Panc1 (cell line): ENCODE measurements at regions of chr13 and their contacts with region 1.

Region 1: GRCh38 chr13:104779311-104779710 is 1713.1 kb upstream of the SLC10A2 start:
- DNase-seq: no peak
- ATAC-seq: no peak
- H3K4me3 ChIP-seq: no peak overlapping the region
- H3K27ac ChIP-seq: no peak overlapping the region
- H3K4me1 ChIP-seq: no peaks in the 10 kb centered on the region
- H3K27me3 ChIP-seq: no peaks in the 10 kb centered on the region
- CTCF ChIP-seq: no peak

Region 2: DNA sequence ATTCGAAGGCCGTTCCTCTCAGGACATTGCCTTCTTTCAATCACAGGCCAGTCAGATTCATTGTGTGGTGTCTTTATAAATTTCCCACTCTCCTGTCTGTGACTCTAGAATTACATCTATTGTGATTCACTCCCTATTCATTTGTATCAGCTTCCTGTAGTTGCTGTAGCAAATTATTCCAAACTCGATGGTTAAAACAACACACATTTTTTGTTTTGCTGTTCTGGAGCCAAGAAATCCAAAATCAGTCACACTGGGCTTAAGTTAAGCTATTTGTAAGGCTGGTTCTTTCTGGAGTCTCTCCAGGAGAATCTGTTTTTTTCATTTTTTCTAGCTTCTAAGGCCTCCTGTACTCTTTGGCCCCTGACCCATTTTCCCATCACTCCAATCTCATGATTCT is 226.1 kb before region 1 on chr13:
- CTCF ChIA-PET with region 1: no interaction called
- POLR2A ChIA-PET with region 1: no interaction called
- in situ Hi-C with region 1: no loop called
- intact Hi-C with region 1: no loop called
- DNase-seq: no peak
- ATAC-seq: no peak
- H3K4me3 ChIP-seq: no peak overlapping the region
- H3K27ac ChIP-seq: no peak overlapping the region
- H3K4me1 ChIP-seq: no peaks in the 10 kb centered on the region
- H3K27me3 ChIP-seq: no peaks in the 10 kb centered on the region
- CTCF ChIP-seq: no peak

Region 3: DNA sequence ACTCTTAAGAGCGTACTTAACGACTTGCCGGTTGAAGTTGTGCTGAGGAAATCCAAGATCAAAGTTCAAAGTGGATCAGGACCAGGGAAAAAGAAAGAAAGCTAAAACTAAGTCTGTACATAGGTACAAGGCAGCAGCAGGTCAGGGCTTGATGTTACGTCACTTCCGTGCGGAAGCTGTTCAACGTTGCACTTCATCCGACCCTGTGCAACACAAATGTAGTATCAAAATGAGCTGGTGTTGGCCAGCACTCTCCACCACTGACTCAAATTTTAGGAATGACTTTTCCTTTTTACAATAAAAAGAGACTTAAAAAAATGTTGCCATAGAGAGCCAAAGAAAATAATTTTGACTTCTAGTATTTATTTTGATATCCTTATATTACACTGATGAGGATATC is 440.8 kb after region 1 on chr13:
- CTCF ChIA-PET with region 1: interaction called, 11 read pairs
- POLR2A ChIA-PET with region 1: no interaction called
- in situ Hi-C with region 1: no loop called
- intact Hi-C with region 1: no loop called
- DNase-seq: no peak
- ATAC-seq: no peak
- H3K4me3 ChIP-seq: no peak overlapping the region
- H3K27ac ChIP-seq: no peak overlapping the region
- H3K4me1 ChIP-seq: no peaks in the 10 kb centered on the region
- H3K27me3 ChIP-seq: no peaks in the 10 kb centered on the region
- CTCF ChIP-seq: no peak